Ovary (tissue), 10 donors: ENCODE measurements at regions of chr5 and their contacts with region 1.

Region 1: GRCh38 chr5:33888587-33888986 is 3.2 kb downstream of the ADAMTS12 start:
- DNase-seq: no peak
- H3K4me3 ChIP-seq: no peak overlapping the region
- H3K27ac ChIP-seq: no peak overlapping the region
- H3K4me1 ChIP-seq: peaks cover 20% of the 10 kb centered on the region
- H3K27me3 ChIP-seq: no peaks in the 10 kb centered on the region
- CTCF ChIP-seq: no peak
- EP300 ChIP-seq: no peak
- POLR2A ChIP-seq: no peak

Region 2: GRCh38 chr5:33832404-33833236 is 56.0 kb before region 1 on chr5:
- intact Hi-C with region 1: loop called in 1 of 4 experiments (anchors 10 kb)
- DNase-seq: no peak
- H3K4me3 ChIP-seq: no peak overlapping the region
- H3K27ac ChIP-seq: no peak overlapping the region
- H3K4me1 ChIP-seq: no peaks in the 10 kb centered on the region
- H3K27me3 ChIP-seq: no peaks in the 10 kb centered on the region
- CTCF ChIP-seq: no peak
- EP300 ChIP-seq: no peak
- POLR2A ChIP-seq: no peak